Heart left ventricle (tissue), 16 donors: ENCODE measurements at regions of chr15 and their contacts with region 1.

Region 1: GRCh38 chr15:40982855-40983254 is 29.6 kb downstream of the CHAC1 start:
- DNase-seq: peak in 2 of 5 donors; percentile 23 to 40
- ATAC-seq: peak in 2 of 4 donors; percentile 25 to 42
- H3K4me3 ChIP-seq: no peak overlapping the region
- H3K27ac ChIP-seq: peak overlapping the region in 2 of 12 donors; percentile 28 to 32
- H3K4me1 ChIP-seq: peaks cover 0 to 6% (median 0%) of the 10 kb centered on the region in 12 donors
- H3K27me3 ChIP-seq: no peaks in the 10 kb centered on the region
- CTCF ChIP-seq: no peak
- POLR2A ChIP-seq: no peak

Region 2: GRCh38 chr15:40274350-40275274 is 708.2 kb before region 1 on chr15:
- intact Hi-C with region 1: no loop called
- DNase-seq: peak; percentile 79 to 90 (median 82)
- ATAC-seq: peak; percentile 43 to 69 (median 55)
- H3K4me3 ChIP-seq: no peak overlapping the region
- H3K27ac ChIP-seq: no peak overlapping the region
- H3K4me1 ChIP-seq: peaks cover 0 to 31% (median 2%) of the 10 kb centered on the region in 12 donors
- H3K27me3 ChIP-seq: peaks cover 2 to 20% (median 8%) of the 10 kb centered on the region in 9 donors
- CTCF ChIP-seq: peak; percentile 99 to 100 (median 100)
- POLR2A ChIP-seq: no peak

Region 3: GRCh38 chr15:40952901-40953712 is 29.7 kb before region 1 on chr15 and contains the start of gene CHAC1:
- intact Hi-C with region 1: no loop called
- DNase-seq: peak; percentile 93 to 96 (median 96)
- ATAC-seq: peak; percentile 72 to 92 (median 91)
- H3K4me3 ChIP-seq: peak within 1 kb of the TSS; percentile 59 to 83 (median 74)
- H3K27ac ChIP-seq: peak within 1 kb of the TSS in 11 of 12 donors; percentile 14 to 87 (median 71)
- H3K4me1 ChIP-seq: peaks cover 0 to 44% (median 22%) of the 10 kb centered on the region in 12 donors
- H3K27me3 ChIP-seq: no peaks in the 10 kb centered on the region
- CTCF ChIP-seq: peak in 3 of 12 donors; percentile 9 to 20 (median 10)
- POLR2A ChIP-seq: peak; percentile 26 to 60
- total RNA-seq, gene CHAC1: 0.72 to 5.3 (median 1.8) TPM

Region 4: GRCh38 chr15:41051139-41051538 is 68.3 kb after region 1 on chr15:
- intact Hi-C with region 1: loop called in 1 of 10 experiments (anchors 10 kb)
- DNase-seq: no peak
- ATAC-seq: no peak
- H3K4me3 ChIP-seq: no peak overlapping the region
- H3K27ac ChIP-seq: no peak overlapping the region
- H3K4me1 ChIP-seq: no peaks in the 10 kb centered on the region
- H3K27me3 ChIP-seq: no peaks in the 10 kb centered on the region
- CTCF ChIP-seq: no peak
- POLR2A ChIP-seq: no peak